ENCODE measurements at regions of chr13 and their contacts with region 1.

Region 1: GRCh38 chr13:40534456-40534855 is 132.0 kb downstream of the FOXO1 start:
- DNase-seq: no peak
- H3K4me3 ChIP-seq: no peak overlapping the region
- H3K27ac ChIP-seq: no peak overlapping the region
- H3K4me1 ChIP-seq: peaks cover 11% of the 10 kb centered on the region
- H3K27me3 ChIP-seq: no peaks in the 10 kb centered on the region
- CTCF ChIP-seq: no peak

Region 2: GRCh38 chr13:40464337-40465014 is 70.0 kb before region 1 on chr13:
- CTCF ChIA-PET with region 1: no interaction called
- dilution Hi-C with region 1: loop called (anchors 5 kb)
- in situ Hi-C with region 1: no loop called
- intact Hi-C with region 1: no loop called
- DNase-seq: no peak
- H3K4me3 ChIP-seq: no peak overlapping the region
- H3K27ac ChIP-seq: no peak overlapping the region
- H3K4me1 ChIP-seq: peaks cover 15% of the 10 kb centered on the region
- H3K27me3 ChIP-seq: no peaks in the 10 kb centered on the region
- CTCF ChIP-seq: no peak

Measured in mammary epithelial cell (primary cell).